ENCODE measurements at regions of chr2 and their contacts with region 1.

Region 1: GRCh38 chr2:172427256-172427989 is at the start of gene ITGA6:
- DNase-seq: peak; percentile 79
- H3K4me3 Mint-ChIP-seq: peak within 1 kb of the TSS; percentile 81
- H3K27ac Mint-ChIP-seq: peak within 1 kb of the TSS; percentile 83
- H3K4me1 Mint-ChIP-seq: peaks cover 76% of the 10 kb centered on the region
- H3K27me3 Mint-ChIP-seq: no peaks in the 10 kb centered on the region
- total RNA-seq, gene ITGA6: 16.5 to 16.8 TPM

Region 2: DNA sequence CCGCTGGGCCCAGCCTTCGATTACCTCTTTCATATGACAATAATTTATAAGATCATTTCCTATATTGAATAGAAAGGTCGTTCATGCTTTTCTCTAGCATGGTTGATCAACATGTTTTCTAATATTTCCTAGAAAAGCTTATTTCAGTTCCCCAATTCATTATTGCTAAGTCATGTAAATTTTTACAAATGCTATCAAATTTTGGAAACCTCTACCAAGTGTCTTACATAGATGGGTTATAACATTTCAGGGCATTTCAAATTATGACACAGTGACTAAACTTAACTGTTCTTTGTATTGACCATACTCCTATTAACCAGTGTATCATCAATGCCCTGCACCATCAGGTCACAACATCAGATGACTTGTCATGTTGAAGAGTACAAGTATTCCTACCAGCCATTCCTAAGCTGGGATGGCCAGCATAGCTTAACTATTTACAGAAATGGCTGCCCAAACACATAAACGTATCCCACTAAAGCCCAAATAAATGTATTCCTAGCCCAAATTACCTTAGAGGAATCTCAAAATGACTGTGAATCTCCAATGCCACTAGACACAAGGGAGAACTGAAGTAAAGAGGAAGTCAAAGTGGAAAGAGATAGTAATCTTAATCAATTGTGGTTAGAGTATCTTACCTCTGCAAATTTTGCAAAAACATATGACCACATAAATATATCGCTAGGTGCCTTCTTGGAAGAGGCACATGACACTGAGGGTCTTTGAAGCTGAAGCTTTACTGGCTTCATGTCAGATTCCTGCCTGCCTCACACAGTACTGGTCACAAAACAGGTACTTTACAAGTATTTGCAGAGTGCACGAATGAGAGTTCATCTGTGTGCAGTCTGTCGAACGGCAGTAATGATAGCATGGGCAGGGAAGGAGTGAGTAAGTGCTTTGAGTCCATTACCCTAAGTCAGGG is 1179.4 kb before region 1 on chr2:
- CTCF ChIA-PET with region 1: no interaction called
- intact Hi-C with region 1: no loop called
- DNase-seq: peak; percentile 44
- H3K4me3 Mint-ChIP-seq: no peak overlapping the region
- H3K27ac Mint-ChIP-seq: no peak overlapping the region
- H3K4me1 Mint-ChIP-seq: peaks cover 41% of the 10 kb centered on the region
- H3K27me3 Mint-ChIP-seq: no peaks in the 10 kb centered on the region

Region 3: GRCh38 chr2:172193331-172194089 is 233.9 kb before region 1 on chr2:
- CTCF ChIA-PET with region 1: no interaction called
- intact Hi-C with region 1: no loop called
- DNase-seq: no peak
- H3K4me3 Mint-ChIP-seq: no peak overlapping the region
- H3K27ac Mint-ChIP-seq: no peak overlapping the region
- H3K4me1 Mint-ChIP-seq: peaks cover 14% of the 10 kb centered on the region
- H3K27me3 Mint-ChIP-seq: peaks cover 3% of the 10 kb centered on the region

Region 4: GRCh38 chr2:172253190-172254052 is 174.0 kb before region 1 on chr2:
- CTCF ChIA-PET with region 1: no interaction called
- intact Hi-C with region 1: loop called (anchors 2 kb)
- DNase-seq: peak; percentile 77
- H3K4me3 Mint-ChIP-seq: no peak overlapping the region
- H3K27ac Mint-ChIP-seq: peak overlapping the region; percentile 65
- H3K4me1 Mint-ChIP-seq: peaks cover 36% of the 10 kb centered on the region
- H3K27me3 Mint-ChIP-seq: no peaks in the 10 kb centered on the region

Region 5: GRCh38 chr2:172442072-172442895 is 14.9 kb after region 1 on chr2:
- CTCF ChIA-PET with region 1: interaction called, 34 read pairs
- intact Hi-C with region 1: loop called (anchors 1 kb)
- DNase-seq: peak; percentile 87
- H3K4me3 Mint-ChIP-seq: peak overlapping the region; percentile 58
- H3K27ac Mint-ChIP-seq: no peak overlapping the region
- H3K4me1 Mint-ChIP-seq: peaks cover 69% of the 10 kb centered on the region
- H3K27me3 Mint-ChIP-seq: no peaks in the 10 kb centered on the region

Region 6: GRCh38 chr2:172516299-172516698 is 88.9 kb after region 1 on chr2:
- CTCF ChIA-PET with region 1: no interaction called
- intact Hi-C with region 1: no loop called
- DNase-seq: no peak
- H3K4me3 Mint-ChIP-seq: no peak overlapping the region
- H3K27ac Mint-ChIP-seq: no peak overlapping the region
- H3K4me1 Mint-ChIP-seq: peaks cover 4% of the 10 kb centered on the region
- H3K27me3 Mint-ChIP-seq: no peaks in the 10 kb centered on the region

Measured in activated naive CD4-positive, alpha-beta T cell treated with anti-CD3 and anti-CD28 coated beads for 36 hours (primary cell).